IMR-90 (cell line): ENCODE measurements at regions of chr20 and their contacts with region 1.

Region 1: GRCh38 chr20:46089417-46090388 is at the start of gene NCOA5:
- DNase-seq: peak; percentile 95
- ATAC-seq: peak; percentile 94
- H3K4me3 ChIP-seq: peak within 1 kb of the TSS; percentile 91
- H3K27ac ChIP-seq: peak within 1 kb of the TSS; percentile 97
- H3K4me1 ChIP-seq: peaks cover 7% of the 10 kb centered on the region
- H3K27me3 ChIP-seq: no peaks in the 10 kb centered on the region
- CTCF ChIP-seq: peak; percentile 44
- POLR2A ChIP-seq: peak; percentile 94
- RAD21 ChIP-seq: no peak
- total RNA-seq, gene NCOA5: 20.6 and 22.5 TPM in 2 replicates

Region 2: DNA sequence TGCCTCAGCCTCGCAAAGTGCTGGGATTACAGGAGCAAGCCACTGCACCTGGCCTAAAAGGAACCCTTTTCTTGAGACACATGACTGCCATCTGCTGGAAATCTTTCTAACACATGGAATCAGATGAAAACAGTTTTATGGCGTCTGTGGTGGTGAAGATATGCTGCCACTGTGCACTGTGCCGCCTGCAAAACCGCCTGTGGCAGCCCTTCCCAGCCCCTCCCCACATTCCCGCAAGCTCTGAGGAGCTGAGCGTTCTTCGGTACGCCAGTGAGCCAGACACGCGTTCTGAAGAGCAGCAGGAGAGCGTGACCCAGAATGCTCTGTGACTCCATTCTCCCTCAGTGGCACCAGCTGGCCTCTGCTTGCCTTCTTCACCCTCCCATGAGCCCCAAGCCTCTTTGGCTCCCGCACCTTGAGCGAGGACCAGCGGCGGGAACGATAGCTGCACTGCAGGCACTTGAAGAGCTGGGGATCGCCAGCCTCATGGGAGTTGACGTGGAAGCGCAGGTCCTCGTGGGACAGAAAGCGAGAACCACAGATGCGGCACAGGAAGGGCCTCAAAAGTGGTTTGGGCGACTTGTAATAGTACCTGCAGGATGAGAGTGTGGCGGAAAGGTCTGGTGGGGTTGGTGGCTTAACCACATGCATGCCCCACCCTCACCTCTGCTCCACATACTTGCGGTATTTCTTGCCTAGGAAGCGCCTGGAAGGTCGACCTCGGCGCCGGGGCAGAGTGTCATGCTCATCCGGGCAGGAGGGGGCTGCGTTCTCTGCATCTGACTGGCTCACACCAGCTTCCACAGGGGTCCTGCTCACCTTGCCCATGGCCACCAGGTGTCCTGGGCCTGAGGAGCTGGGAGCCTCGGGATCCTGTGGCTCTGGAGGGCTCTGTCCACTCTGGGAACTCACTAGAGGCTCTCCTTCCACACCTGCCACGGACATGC is 126.4 kb before region 1 on chr20:
- CTCF ChIA-PET with region 1: no interaction called
- POLR2A ChIA-PET with region 1: no interaction called
- dilution Hi-C with region 1: no loop called
- in situ Hi-C with region 1: no loop called
- intact Hi-C with region 1: no loop called
- DNase-seq: peak; percentile 33
- ATAC-seq: peak; percentile 48; the same call in 1 of the 2 replicates
- H3K4me3 ChIP-seq: no peak overlapping the region
- H3K27ac ChIP-seq: no peak overlapping the region
- H3K4me1 ChIP-seq: no peaks in the 10 kb centered on the region
- H3K27me3 ChIP-seq: no peaks in the 10 kb centered on the region
- CTCF ChIP-seq: 0 out of 2 replicates have a peak, but pooled peaks have one; percentile 29
- POLR2A ChIP-seq: no peak
- RAD21 ChIP-seq: peak; percentile 36

Region 3: DNA sequence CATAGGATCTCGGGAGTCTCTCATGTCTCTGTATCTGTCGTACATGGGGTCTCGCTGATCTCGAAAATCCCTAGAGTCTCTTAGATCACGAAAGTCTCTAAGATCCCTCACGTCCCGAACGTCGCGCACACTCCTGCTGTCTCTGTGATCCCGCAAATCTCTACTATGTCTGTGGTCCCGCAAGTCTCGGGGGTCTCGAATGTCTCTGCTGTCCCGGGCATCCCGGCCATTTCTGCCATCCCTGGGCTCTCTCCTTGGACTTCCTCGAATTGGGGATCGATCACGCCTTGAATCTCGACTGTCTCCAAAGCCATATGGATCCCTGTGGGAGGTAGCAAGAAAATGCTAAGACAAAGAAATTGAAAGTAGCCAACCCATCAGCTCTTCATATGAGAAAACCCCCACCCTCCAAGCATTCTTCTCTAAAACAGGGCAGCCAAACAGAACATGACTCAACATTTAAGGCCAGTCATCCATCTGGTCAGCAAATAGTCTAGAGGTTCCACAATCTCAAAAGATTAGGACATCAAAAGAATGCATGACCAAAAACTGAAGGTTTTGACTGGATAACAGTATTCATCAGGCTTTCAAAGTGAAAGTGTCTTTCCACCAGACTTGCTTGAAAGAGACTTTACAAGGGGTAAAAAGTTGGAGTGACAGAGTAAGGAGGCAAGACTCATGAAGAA is 19.3 kb before region 1 on chr20:
- CTCF ChIA-PET with region 1: no interaction called
- POLR2A ChIA-PET with region 1: no interaction called
- dilution Hi-C with region 1: no loop called
- in situ Hi-C with region 1: no loop called
- intact Hi-C with region 1: loop called (anchors 2 kb)
- DNase-seq: peak; percentile 86
- ATAC-seq: peak; percentile 96
- H3K4me3 ChIP-seq: no peak overlapping the region
- H3K27ac ChIP-seq: peak overlapping the region; percentile 40; the same call in 1 of the 2 replicates
- H3K4me1 ChIP-seq: peaks cover 2% of the 10 kb centered on the region; the same call in 1 of the 2 replicates
- H3K27me3 ChIP-seq: no peaks in the 10 kb centered on the region
- CTCF ChIP-seq: no peak
- POLR2A ChIP-seq: no peak
- RAD21 ChIP-seq: no peak